Activated CD4-positive, alpha-beta T cell treated with anti-CD3 and anti-CD28 coated beads, Interleukin-2, amount 10 ng/mL, durations not matched to agents 7 days and 5 days (primary cell): ENCODE measurements at regions of chr2 and their contacts with region 1.

Region 1: GRCh38 chr2:120298173-120298835 is 45.7 kb downstream of the RALB start:
- DNase-seq: no peak
- H3K4me3 Mint-ChIP-seq: no peak overlapping the region
- H3K27ac Mint-ChIP-seq: no peak overlapping the region
- H3K4me1 Mint-ChIP-seq: peaks cover 25% of the 10 kb centered on the region
- H3K27me3 Mint-ChIP-seq: no peaks in the 10 kb centered on the region

Region 2: GRCh38 chr2:120312861-120313694 is 14.8 kb after region 1 on chr2:
- CTCF ChIA-PET with region 1: interaction called, 42 read pairs
- POLR2A ChIA-PET with region 1: no interaction called
- DNase-seq: peak; percentile 85
- H3K4me3 Mint-ChIP-seq: peak overlapping the region; percentile 65
- H3K27ac Mint-ChIP-seq: peak overlapping the region; percentile 64
- H3K4me1 Mint-ChIP-seq: peaks cover 52% of the 10 kb centered on the region
- H3K27me3 Mint-ChIP-seq: no peaks in the 10 kb centered on the region